Right cardiac atrium (tissue), 5 donors: ENCODE measurements at regions of chr11 and their contacts with region 1.

Region 1: DNA sequence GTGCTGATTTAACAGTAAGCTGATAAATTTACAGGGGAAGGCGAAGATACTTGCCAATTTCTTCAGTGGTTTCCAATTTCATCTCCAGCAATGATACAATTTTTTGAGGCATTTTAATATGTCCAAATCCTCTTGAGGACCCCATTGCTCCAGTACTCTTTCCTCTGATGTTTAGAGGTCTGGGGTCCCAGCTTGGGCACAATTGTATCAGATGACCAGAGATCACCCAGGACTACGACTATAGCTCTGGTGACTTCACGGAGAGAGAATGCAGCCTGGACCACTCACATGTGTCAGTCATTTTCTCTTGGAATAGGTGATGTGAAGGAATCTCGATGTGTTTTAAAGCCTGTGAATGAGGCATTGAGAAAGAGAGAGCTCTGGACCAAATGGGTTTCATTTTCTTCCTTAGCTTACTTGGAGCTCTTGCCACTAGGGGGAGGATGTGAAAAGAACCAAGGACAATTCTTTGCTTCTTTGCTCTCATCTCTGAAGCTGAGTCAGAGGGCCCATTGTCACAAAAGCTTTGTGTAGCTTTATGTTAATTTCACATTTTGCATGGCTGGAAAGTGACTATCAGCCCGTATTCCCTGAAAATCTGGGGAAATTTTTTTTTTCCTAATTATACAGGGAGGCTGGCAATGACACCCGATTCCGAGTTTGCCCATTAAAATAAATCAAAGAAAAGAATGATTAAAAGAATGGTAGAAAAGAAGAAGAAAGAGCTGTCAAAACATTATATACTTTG is 6.7 kb upstream of the CCDC90B start:
- DNase-seq: no peak
- ATAC-seq: peak; percentile 71 to 78
- H3K4me3 ChIP-seq: no peak overlapping the region
- H3K27ac ChIP-seq: no peak overlapping the region
- H3K4me1 ChIP-seq: peaks cover 2% of the 10 kb centered on the region
- H3K27me3 ChIP-seq: no peaks in the 10 kb centered on the region

Region 2: GRCh38 chr11:83374311-83374710 is 81.4 kb after region 1 on chr11:
- intact Hi-C with region 1: no loop called
- DNase-seq: no peak
- ATAC-seq: no peak
- H3K4me3 ChIP-seq: no peak overlapping the region
- H3K27ac ChIP-seq: no peak overlapping the region
- H3K4me1 ChIP-seq: no peaks in the 10 kb centered on the region
- H3K27me3 ChIP-seq: no peaks in the 10 kb centered on the region

Region 3: DNA sequence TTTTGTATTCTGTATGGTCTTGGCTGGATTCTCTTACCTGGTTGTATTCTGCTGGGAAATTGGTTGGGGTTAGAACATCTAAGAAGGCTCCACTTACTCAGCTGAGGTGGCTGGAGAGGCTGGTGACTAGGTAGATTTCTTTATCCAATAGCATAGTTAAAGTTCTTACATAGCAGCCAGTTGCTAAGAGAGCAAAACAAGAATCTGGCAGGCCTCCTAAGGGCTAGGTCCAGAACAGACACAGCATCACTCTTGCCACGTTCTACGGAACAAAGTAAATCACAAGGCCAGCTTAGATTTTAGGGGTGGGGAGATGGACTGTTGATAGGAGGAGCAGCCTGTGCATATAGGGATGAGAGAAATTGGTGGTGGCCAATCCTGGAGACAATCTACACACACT is 134.6 kb after region 1 on chr11:
- intact Hi-C with region 1: no loop called
- DNase-seq: no peak
- ATAC-seq: no peak
- H3K4me3 ChIP-seq: no peak overlapping the region
- H3K27ac ChIP-seq: no peak overlapping the region
- H3K4me1 ChIP-seq: no peaks in the 10 kb centered on the region
- H3K27me3 ChIP-seq: no peaks in the 10 kb centered on the region

Region 4: GRCh38 chr11:83724008-83724461 is 431.2 kb after region 1 on chr11:
- intact Hi-C with region 1: loop called in 3 of 4 experiments (anchors 10 kb)
- DNase-seq: peak in 1 of 3 donors; percentile 30
- ATAC-seq: peak; percentile 84 to 88
- H3K4me3 ChIP-seq: peak overlapping the region; percentile 73
- H3K27ac ChIP-seq: no peak overlapping the region
- H3K4me1 ChIP-seq: no peaks in the 10 kb centered on the region
- H3K27me3 ChIP-seq: no peaks in the 10 kb centered on the region

Region 5: DNA sequence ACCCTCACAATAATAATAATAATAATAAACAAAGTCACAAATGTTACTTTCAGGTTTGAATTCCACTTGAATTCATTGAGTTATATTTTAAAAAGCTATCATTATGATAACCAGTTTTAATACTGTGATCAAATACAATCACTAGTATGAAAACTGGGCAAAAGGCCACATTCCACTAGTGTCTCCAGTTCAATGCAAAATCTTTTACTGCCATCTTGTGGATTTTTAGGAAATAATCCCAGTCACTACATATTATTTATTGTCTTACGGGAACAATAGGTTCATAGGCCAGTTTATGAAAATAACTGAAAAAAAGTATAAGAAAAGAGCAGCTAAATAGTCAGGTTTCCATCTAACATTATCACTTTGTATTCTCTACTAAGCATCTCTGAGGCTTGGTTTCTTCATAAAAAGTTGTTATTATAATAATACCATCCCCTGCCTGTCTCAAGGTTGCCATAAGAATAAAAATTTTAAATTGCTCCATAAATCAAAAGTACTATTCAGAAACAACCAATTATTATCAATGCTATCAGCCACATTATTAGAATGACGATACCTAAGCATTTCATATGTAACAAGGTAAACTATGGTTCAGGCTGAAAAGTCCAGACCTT is 527.2 kb after region 1 on chr11:
- intact Hi-C with region 1: loop called (anchors 5 to 10 kb)
- DNase-seq: no peak
- ATAC-seq: peak; percentile 57 to 67
- H3K4me3 ChIP-seq: no peak overlapping the region
- H3K27ac ChIP-seq: no peak overlapping the region
- H3K4me1 ChIP-seq: no peaks in the 10 kb centered on the region
- H3K27me3 ChIP-seq: no peaks in the 10 kb centered on the region